ENCODE measurements at regions of chr1 and their contacts with region 1.

Region 1: GRCh38 chr1:84944767-84945486 is 51.9 kb upstream of the LPAR3 start:
- DNase-seq: peak; percentile 41 to 96 (median 60)
- ATAC-seq: peak; percentile 95
- H3K4me3 ChIP-seq: peak overlapping the region; percentile 55
- H3K4me3 Mint-ChIP-seq: peak overlapping the region; percentile 89
- H3K27ac ChIP-seq: peak overlapping the region; percentile 80 to 89
- H3K27ac Mint-ChIP-seq: peak overlapping the region; percentile 98
- H3K4me1 ChIP-seq: peaks cover 12% of the 10 kb centered on the region
- H3K4me1 Mint-ChIP-seq: peaks cover 15% of the 10 kb centered on the region
- H3K27me3 ChIP-seq: no peaks in the 10 kb centered on the region
- H3K27me3 Mint-ChIP-seq: no peaks in the 10 kb centered on the region
- CTCF ChIP-seq: peak; percentile 98

Region 2: DNA sequence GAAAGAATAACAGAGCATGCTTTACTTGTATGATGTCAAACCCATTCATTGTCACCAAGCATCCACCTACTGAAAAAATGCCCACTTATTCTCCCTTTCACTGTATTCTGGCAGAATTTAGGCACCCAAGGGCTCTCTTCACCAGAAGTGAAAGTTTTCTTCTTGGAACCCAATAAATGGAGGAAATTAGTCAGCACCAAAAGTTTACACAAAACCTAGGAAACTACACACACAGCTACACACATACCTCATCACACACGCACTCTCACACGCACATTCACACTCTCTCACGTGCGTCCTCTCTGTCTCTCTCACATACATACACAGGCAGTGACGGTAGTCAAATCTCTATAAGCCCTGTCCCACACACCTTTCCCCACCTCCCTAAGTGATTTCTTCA is 14.4 kb after region 1 on chr1:
- CTCF ChIA-PET with region 1: interaction called, 14 read pairs
- POLR2A ChIA-PET with region 1: interaction called, 4 read pairs
- intact Hi-C with region 1: no loop called
- DNase-seq: peak in 3 of 14 experiments; percentile 25 to 41 (median 27)
- ATAC-seq: peak; percentile 66
- H3K4me3 ChIP-seq: no peak overlapping the region
- H3K4me3 Mint-ChIP-seq: no peak overlapping the region
- H3K27ac ChIP-seq: no peak overlapping the region
- H3K27ac Mint-ChIP-seq: no peak overlapping the region
- H3K4me1 ChIP-seq: no peaks in the 10 kb centered on the region
- H3K4me1 Mint-ChIP-seq: no peaks in the 10 kb centered on the region
- H3K27me3 ChIP-seq: no peaks in the 10 kb centered on the region
- H3K27me3 Mint-ChIP-seq: peaks cover 5% of the 10 kb centered on the region
- CTCF ChIP-seq: no peak

Region 3: DNA sequence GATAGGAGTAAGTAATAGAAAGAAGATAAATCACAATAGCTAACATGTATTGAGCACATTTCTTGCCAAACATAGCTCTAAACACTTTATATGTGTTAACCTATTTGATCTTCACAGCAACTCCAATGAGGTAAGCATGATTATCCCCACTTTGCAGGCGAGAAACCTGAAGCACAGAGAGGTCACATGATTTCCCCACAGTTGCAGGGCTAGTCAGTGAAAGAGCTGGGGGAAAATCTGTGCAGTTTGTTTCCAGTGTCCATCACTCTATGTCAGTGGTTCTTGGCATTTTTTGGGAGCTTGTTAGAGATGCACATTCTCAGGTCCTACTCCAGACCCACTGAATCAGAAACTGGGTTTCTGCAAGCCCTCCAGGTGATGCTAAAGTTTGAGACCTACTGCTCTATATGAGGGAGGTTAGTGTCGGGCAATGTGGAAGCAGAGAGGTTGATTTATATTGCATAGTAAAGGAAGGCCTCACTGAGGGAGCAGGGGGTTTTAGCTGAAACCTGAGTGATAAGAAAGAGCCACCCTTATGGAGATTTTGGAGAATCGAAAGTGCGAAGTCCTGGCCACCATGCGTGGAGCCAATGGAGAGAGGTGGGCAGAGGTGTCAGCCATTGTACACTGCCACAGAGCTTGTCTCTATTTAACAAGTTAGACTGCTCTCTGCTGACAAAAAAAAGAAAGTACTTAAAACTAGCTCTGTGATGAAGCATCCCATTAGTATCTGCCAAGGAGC is 82.5 kb after region 1 on chr1:
- CTCF ChIA-PET with region 1: interaction called, 32 read pairs
- POLR2A ChIA-PET with region 1: interaction called, 47 read pairs
- intact Hi-C with region 1: loop called (anchors 1 to 2 kb)
- DNase-seq: peak in 4 of 14 experiments; percentile 11 to 62 (median 58)
- ATAC-seq: peak; percentile 88
- H3K4me3 ChIP-seq: peak overlapping the region; percentile 24
- H3K4me3 Mint-ChIP-seq: peak overlapping the region; percentile 43
- H3K27ac ChIP-seq: no peak overlapping the region
- H3K27ac Mint-ChIP-seq: peak overlapping the region; percentile 45
- H3K4me1 ChIP-seq: peaks cover 5% of the 10 kb centered on the region
- H3K4me1 Mint-ChIP-seq: peaks cover 9% of the 10 kb centered on the region
- H3K27me3 ChIP-seq: no peaks in the 10 kb centered on the region
- H3K27me3 Mint-ChIP-seq: no peaks in the 10 kb centered on the region
- CTCF ChIP-seq: no peak

Region 4: DNA sequence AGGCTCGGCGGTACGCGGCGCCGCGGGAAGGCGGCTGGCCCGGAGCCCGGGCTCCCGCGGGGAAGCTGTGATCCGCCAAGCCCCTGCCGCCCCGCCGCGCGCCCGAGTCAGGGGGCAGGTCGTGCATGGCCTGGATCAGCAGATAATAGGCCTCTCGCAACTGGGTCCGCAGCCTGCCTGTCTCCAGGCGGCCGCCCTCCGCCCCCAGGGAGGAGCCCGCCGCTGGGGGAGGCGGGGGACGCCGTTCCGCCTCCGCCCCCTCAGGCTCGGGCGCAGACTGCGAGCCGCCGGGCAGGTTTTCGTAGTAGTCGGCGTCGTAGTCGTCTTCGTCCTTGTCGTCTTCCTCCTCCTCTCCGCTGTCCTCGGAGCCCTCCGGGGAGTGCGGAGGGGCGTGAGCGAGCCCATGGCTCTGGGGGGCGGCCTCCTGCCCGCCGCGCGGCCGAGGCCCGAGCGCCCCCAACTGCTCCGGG is 256.0 kb after region 1 on chr1 and contains the start of gene SYDE2:
- CTCF ChIA-PET with region 1: interaction called, 6 read pairs
- POLR2A ChIA-PET with region 1: interaction called, 7 read pairs
- intact Hi-C with region 1: loop called in 1 of 2 experiments (anchors 1 kb)
- DNase-seq: peak; percentile 65 to 92 (median 79)
- ATAC-seq: peak; percentile 81
- H3K4me3 ChIP-seq: peak within 1 kb of the TSS; percentile 66
- H3K4me3 Mint-ChIP-seq: peak within 1 kb of the TSS; percentile 98
- H3K27ac ChIP-seq: peak within 1 kb of the TSS; percentile 38 to 95
- H3K27ac Mint-ChIP-seq: peak within 1 kb of the TSS; percentile 97
- H3K4me1 ChIP-seq: peaks cover 16% of the 10 kb centered on the region
- H3K4me1 Mint-ChIP-seq: peaks cover 47% of the 10 kb centered on the region
- H3K27me3 ChIP-seq: no peaks in the 10 kb centered on the region
- H3K27me3 Mint-ChIP-seq: peaks cover 36% of the 10 kb centered on the region
- CTCF ChIP-seq: no peak
- total RNA-seq, gene SYDE2: 6.4 to 6.9 TPM

Region 5: GRCh38 chr1:85259118-85259911 is 314.4 kb after region 1 on chr1 and contains the start of gene C1orf52:
- CTCF ChIA-PET with region 1: interaction called, 53 read pairs
- POLR2A ChIA-PET with region 1: interaction called, 38 read pairs
- intact Hi-C with region 1: loop called (anchors 1 to 2 kb)
- DNase-seq: peak; percentile 92 to 99 (median 96)
- ATAC-seq: peak; percentile 93
- H3K4me3 ChIP-seq: peak within 1 kb of the TSS; percentile 88
- H3K4me3 Mint-ChIP-seq: peak within 1 kb of the TSS; percentile 99
- H3K27ac ChIP-seq: peak within 1 kb of the TSS; percentile 47 to 81
- H3K27ac Mint-ChIP-seq: peak within 1 kb of the TSS; percentile 95
- H3K4me1 ChIP-seq: peaks cover 21% of the 10 kb centered on the region
- H3K4me1 Mint-ChIP-seq: peaks cover 41% of the 10 kb centered on the region
- H3K27me3 ChIP-seq: no peaks in the 10 kb centered on the region
- H3K27me3 Mint-ChIP-seq: no peaks in the 10 kb centered on the region
- CTCF ChIP-seq: peak; percentile 97
- total RNA-seq, gene C1orf52: 62.4 to 66.6 TPM

Region 6: DNA sequence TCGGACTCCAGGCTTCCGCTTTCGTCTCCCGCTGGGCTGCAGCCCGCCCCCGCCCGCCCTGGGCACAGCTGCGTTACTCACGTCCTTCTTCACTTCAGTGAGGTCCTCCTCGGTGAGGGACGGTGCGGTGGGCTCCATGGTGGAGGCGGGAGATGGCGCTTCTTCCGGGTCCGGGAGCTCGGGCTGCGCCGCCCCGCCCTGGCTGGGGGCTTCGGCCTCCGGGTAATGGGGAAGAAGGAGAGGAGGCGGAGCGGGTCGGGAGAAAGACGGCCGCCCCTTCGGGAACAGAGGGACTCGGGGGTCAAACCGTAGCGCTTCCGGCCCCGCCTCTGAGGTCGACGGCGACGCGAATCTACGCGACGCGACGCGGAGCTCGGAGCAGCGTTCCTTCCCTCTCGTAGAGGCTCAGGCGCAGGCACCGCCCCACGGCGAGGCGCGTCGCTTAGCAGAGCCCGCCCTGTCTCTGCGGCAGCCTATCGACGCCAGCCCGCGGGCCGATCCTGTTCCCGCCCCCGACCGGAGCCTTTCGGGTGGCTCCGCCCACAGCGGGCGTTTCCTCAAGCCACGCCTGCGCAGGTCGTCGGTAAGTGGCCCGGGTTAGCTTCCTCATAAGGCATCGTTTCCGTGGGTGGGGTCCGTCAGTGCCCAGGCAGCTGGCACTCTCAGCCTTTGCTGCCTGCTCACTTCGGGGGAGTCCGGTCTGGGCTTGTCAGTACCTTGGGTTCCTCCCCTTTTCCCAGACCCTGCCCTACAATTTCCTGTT is 331.5 kb after region 1 on chr1 and contains the start of gene BCL10:
- CTCF ChIA-PET with region 1: interaction called, 27 read pairs
- POLR2A ChIA-PET with region 1: interaction called, 31 read pairs
- intact Hi-C with region 1: no loop called
- DNase-seq: peak; percentile 93 to 99 (median 96)
- ATAC-seq: peak; percentile 95
- H3K4me3 ChIP-seq: peak within 1 kb of the TSS; percentile 94
- H3K4me3 Mint-ChIP-seq: peak within 1 kb of the TSS; percentile 92
- H3K27ac ChIP-seq: peak within 1 kb of the TSS; percentile 90 to 99
- H3K27ac Mint-ChIP-seq: peak within 1 kb of the TSS; percentile 95
- H3K4me1 ChIP-seq: peaks cover 28% of the 10 kb centered on the region
- H3K4me1 Mint-ChIP-seq: peaks cover 57% of the 10 kb centered on the region
- H3K27me3 ChIP-seq: no peaks in the 10 kb centered on the region
- H3K27me3 Mint-ChIP-seq: no peaks in the 10 kb centered on the region
- CTCF ChIP-seq: no peak
- total RNA-seq, gene BCL10: 50.0 to 52.0 TPM